ENCODE measurements at regions of chr4 and their contacts with region 1.

Region 1: DNA sequence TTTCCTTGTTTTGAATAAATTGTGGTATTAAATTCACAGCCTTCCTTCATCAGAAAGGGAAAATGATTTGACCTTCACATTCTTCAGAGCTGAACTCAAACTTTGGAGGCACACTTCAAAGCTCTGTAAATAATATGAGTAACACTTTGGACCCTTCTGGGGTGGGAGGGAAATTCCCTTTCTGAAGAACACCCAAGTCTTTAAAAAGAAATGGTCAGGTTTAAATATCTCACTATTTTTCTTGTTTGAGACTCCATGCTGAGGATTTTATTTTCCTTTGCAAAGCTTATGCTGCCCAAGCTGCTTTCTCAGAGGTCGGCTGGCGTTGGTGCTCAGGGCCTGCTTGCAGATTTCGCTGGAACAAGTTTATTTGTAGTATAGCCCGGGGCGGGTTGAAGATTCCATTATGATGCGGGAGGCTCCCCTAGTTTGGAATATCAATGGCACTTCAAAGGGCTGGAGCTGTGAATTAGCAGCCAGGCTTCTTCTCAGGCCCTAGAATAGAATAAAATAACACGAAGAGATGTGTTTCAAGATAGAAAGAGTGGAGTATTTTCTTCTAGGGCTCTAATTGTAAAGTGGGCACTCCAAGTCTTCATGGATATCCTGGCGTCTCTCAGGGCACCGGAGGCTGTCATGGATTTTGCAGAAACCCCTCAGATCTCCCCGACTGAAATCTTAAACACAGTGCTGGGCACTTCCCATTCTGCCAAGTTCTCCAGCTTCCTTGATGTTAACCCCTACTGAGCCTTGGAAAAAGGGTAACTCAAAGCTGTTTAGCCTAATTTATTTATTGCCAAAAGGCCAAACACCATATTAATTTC is 315.6 kb downstream of the GPAT3 start:
- DNase-seq: no peak
- ATAC-seq: no peak
- H3K4me3 ChIP-seq: no peak overlapping the region
- H3K4me3 Mint-ChIP-seq: no peak overlapping the region
- H3K27ac ChIP-seq: no peak overlapping the region
- H3K27ac Mint-ChIP-seq: no peak overlapping the region
- H3K4me1 ChIP-seq: no peaks in the 10 kb centered on the region
- H3K4me1 Mint-ChIP-seq: no peaks in the 10 kb centered on the region
- H3K27me3 ChIP-seq: no peaks in the 10 kb centered on the region
- H3K27me3 Mint-ChIP-seq: peaks cover 0 to 22% (median 9%) of the 10 kb centered on the region in 5 donors

Region 2: DNA sequence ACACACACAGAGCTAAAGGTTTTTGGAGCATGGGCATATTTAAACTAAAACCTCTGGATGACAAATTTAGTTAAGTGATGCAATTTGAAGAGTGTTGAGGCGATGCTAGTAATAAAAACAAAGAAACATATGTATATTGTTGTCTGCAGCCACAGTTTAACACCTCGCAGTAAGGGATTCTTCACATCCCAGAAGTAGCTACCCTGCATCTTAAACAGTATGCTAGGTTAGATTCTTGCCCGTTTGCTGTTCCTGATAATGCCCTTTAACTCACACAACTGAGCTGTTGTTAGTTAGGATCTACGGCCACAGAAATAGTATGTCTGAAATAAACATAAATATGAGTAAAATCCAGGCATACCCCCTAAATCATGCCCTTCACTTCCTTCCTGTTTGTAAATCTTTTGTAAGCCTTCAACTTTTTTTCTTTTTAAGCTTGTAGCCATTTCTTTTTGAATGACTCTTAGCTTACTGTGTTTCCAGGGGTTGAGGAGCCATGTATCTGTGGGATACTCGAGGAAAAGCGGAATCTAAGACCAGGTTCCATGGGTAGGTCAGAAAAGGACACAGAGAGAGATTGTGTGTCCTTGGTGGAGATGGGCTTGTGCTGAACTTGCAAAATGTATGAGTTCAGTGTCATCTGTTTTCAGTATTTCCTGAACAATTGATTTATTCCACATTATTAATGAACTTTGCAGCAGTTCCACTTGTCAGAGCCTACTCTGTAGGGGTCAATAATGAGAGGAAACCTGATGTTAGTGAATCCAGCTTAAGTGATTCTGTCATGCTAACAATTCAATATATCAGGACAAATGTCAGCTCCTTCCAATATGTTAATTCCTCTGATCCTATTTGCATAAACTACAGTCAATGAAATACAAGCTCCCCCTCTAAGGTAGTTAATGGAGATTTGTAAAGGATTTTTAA is 34.0 kb after region 1 on chr4:
- CTCF ChIA-PET with region 1: no interaction called
- POLR2A ChIA-PET with region 1: no interaction called
- intact Hi-C with region 1: loop called in 1 of 2 experiments (anchors 1 kb)
- DNase-seq: no peak
- ATAC-seq: no peak
- H3K4me3 ChIP-seq: no peak overlapping the region
- H3K4me3 Mint-ChIP-seq: no peak overlapping the region
- H3K27ac ChIP-seq: no peak overlapping the region
- H3K27ac Mint-ChIP-seq: no peak overlapping the region
- H3K4me1 ChIP-seq: no peaks in the 10 kb centered on the region
- H3K4me1 Mint-ChIP-seq: no peaks in the 10 kb centered on the region
- H3K27me3 ChIP-seq: no peaks in the 10 kb centered on the region
- H3K27me3 Mint-ChIP-seq: peaks cover 0 to 4% (median 0%) of the 10 kb centered on the region in 5 donors

Region 3: DNA sequence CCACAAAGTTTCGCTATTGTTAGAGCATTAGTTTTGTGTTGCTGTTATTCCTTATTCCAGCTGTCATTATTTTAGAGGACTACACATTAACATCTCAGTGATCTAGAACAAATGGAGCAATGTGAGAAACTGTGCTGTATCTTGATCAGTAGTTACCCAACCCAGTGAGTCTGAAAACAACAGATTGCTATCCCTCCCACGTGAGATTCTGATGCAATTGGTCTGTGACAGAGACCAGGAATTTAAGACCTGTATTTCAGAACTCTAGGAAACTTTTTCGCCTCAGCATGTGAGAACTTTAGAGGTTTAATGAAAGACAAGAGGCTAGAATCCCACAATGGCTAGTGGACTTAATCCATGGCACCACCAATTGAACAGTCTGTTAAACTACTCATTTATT is 695.7 kb after region 1 on chr4:
- CTCF ChIA-PET with region 1: no interaction called
- POLR2A ChIA-PET with region 1: no interaction called
- intact Hi-C with region 1: no loop called
- DNase-seq: no peak
- ATAC-seq: no peak
- H3K4me3 ChIP-seq: no peak overlapping the region
- H3K4me3 Mint-ChIP-seq: no peak overlapping the region
- H3K27ac ChIP-seq: no peak overlapping the region
- H3K27ac Mint-ChIP-seq: no peak overlapping the region
- H3K4me1 ChIP-seq: no peaks in the 10 kb centered on the region
- H3K4me1 Mint-ChIP-seq: no peaks in the 10 kb centered on the region
- H3K27me3 ChIP-seq: no peaks in the 10 kb centered on the region
- H3K27me3 Mint-ChIP-seq: peaks cover 0 to 32% (median 12%) of the 10 kb centered on the region in 5 donors